ENCODE measurements at regions of chr22 and their contacts with region 1.

Region 1: DNA sequence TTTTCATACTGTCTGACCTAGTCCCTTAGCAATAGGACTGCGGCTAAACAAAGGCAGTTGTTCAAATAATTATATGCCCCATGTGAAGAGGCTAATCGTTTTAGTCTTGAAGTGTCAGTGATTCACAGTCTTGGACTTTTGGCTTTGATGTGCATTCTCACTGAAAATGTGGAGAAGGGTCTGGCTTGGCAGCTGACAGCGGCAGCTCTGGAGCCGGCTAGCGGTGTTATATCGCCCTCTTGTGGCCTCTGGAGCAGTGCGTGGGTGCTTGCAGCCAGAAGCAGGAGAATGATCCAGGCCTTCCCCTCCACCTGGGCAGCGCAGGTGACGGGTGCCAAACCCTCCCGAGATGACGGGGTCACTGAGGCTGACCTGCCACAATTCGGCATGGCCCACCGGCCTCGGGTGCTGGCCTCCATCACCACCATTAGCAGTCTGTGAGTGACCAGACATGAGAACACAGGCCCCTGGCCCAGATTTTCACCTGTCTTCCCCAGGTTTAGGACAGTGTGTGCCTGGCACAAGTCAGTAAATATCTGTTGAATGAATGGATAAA is 90.3 kb upstream of the PITPNB start:
- DNase-seq: peak; percentile 54 to 79
- ATAC-seq: peak; percentile 91

Region 2: DNA sequence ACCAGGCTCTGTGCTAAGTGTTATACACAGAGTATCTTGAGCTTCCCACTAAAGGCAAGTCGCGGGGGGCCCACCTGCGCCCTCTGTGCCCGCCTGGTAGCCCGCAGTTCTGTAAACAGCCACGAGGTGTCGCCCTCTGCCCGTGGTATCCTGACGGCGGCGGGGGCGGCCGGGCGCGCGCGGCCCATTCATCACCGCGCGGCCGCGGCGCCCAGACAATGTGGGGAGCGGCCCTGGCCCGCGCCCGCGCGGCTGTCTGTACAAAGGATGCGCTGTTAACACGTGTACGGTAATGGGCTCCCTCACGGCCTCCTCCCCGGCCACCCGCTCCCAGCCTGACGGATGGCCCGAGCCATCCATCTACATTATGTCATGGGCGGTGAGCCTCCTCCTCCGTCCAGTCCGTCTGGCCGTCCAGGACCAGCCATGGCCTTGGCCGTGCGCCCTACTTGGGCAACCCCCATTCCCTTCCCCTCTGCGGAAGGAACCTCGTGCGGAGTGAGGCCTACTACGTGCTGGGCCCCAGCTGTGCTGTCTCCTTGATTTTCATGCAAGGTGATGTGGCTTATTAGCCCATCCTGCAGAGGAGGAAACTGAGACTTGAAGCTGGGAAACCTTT is 1252.6 kb before region 1 on chr22:
- intact Hi-C with region 1: loop called in 1 of 2 experiments (anchors 10 kb)
- DNase-seq: peak; percentile 36 to 70
- ATAC-seq: peak; percentile 90

Region 3: GRCh38 chr22:27885977-27886842 is 123.1 kb before region 1 on chr22:
- intact Hi-C with region 1: loop called in 1 of 2 experiments (anchors 2 kb)
- DNase-seq: peak in 1 of 2 donors; percentile 32
- ATAC-seq: peak; percentile 54

Region 4: DNA sequence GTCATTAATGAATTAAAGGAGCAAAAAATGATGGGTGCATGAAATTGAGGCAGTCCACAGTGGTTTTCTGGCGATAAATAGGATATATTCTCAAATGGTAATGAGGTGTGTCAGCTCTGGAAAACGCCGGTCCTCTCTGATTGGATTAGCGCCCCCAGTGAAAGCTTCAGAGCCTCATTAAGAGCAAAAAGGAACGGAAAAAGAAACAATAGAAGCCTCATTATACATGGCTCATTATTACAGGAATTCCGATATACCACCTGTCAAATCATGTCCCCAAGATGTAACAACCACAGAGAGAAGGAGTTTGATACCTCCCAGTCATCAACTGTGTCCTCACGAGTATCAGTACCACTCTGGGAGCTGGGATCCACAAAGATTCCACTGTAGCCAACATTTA is 85.4 kb after region 1 on chr22:
- intact Hi-C with region 1: no loop called
- DNase-seq: no peak
- ATAC-seq: no peak

Measured in left colon (tissue), 2 donors.